Aorta (tissue), 5 donors: ENCODE measurements at regions of chr14 and their contacts with region 1.

Region 1: GRCh38 chr14:57390028-57390805 is at the start of gene NAA30:
- DNase-seq: peak; percentile 96
- ATAC-seq: peak; percentile 98
- H3K4me3 ChIP-seq: peak within 1 kb of the TSS; percentile 72 to 88
- H3K27ac ChIP-seq: peak within 1 kb of the TSS; percentile 45 to 46
- H3K4me1 ChIP-seq: peaks cover 3 to 4% of the 10 kb centered on the region in 2 donors
- H3K27me3 ChIP-seq: no peaks in the 10 kb centered on the region
- total RNA-seq, gene NAA30: 16.2 to 17.0 TPM

Region 2: GRCh38 chr14:57268161-57269069 is 121.8 kb before region 1 on chr14 and contains the starts of genes AP5M1 and EXOC5:
- intact Hi-C with region 1: loop called in 1 of 2 experiments (anchors 10 kb)
- DNase-seq: peak; percentile 95 to 96
- ATAC-seq: peak; percentile 96
- H3K4me3 ChIP-seq: peak within 1 kb of the TSS; percentile 84 to 96
- H3K27ac ChIP-seq: peak within 1 kb of the TSS; percentile 42 to 68
- H3K4me1 ChIP-seq: peaks cover 3 to 4% of the 10 kb centered on the region in 2 donors
- H3K27me3 ChIP-seq: no peaks in the 10 kb centered on the region
- total RNA-seq, gene AP5M1: 30.8 to 36.9 TPM
- total RNA-seq, gene EXOC5: 72.8 to 75.1 TPM

Region 3: GRCh38 chr14:57785058-57785457 is 394.8 kb after region 1 on chr14:
- intact Hi-C with region 1: no loop called
- DNase-seq: no peak
- ATAC-seq: no peak
- H3K4me3 ChIP-seq: no peak overlapping the region
- H3K27ac ChIP-seq: no peak overlapping the region
- H3K4me1 ChIP-seq: no peaks in the 10 kb centered on the region
- H3K27me3 ChIP-seq: no peaks in the 10 kb centered on the region